ENCODE measurements at regions of chr4 and their contacts with region 1.

Region 1: GRCh38 chr4:142840516-142841123 is 5.5 kb downstream of the INPP4B start:
- H3K4me3 Mint-ChIP-seq: no peak overlapping the region
- H3K27ac Mint-ChIP-seq: no peak overlapping the region
- H3K4me1 Mint-ChIP-seq: peaks cover 7% of the 10 kb centered on the region
- H3K27me3 Mint-ChIP-seq: peaks cover 13% of the 10 kb centered on the region

Region 2: DNA sequence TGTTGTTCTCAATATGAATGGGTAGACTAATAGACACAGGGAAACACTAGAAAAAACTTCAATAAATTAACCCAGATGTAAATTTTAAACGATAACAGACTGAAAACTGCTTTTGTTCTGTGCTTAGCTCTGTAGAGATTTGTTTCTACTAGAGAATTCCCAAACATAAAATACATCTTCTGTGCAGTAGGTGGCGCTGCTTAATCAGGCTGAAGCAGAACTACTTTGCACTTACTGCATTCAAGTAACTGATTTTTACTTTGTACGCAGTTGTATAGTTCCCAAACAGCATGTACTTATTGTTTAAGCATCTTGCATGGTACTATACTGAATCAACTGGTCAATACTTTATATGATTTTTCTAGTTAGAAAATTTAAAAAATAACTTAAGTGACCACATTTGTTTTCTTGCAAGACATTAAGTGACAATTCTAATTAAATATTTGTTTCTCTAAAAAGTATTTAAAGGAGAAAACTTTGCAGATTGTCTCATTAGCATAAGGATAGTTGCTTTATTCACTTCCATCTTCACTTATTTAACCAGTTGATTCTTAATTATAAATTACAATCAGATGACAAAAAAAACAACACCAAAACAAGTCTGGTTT is 713.6 kb before region 1 on chr4:
- intact Hi-C with region 1: loop called (anchors 5 kb)
- H3K4me3 Mint-ChIP-seq: no peak overlapping the region
- H3K27ac Mint-ChIP-seq: no peak overlapping the region
- H3K4me1 Mint-ChIP-seq: peaks cover 9% of the 10 kb centered on the region
- H3K27me3 Mint-ChIP-seq: no peaks in the 10 kb centered on the region

Region 3: GRCh38 chr4:142282870-142283431 is 557.7 kb before region 1 on chr4:
- intact Hi-C with region 1: loop called (anchors 5 kb)
- H3K4me3 Mint-ChIP-seq: no peak overlapping the region
- H3K27ac Mint-ChIP-seq: no peak overlapping the region
- H3K4me1 Mint-ChIP-seq: peaks cover 6% of the 10 kb centered on the region
- H3K27me3 Mint-ChIP-seq: no peaks in the 10 kb centered on the region

Region 4: GRCh38 chr4:142353149-142353738 is 487.4 kb before region 1 on chr4:
- intact Hi-C with region 1: loop called (anchors 1 kb)
- H3K4me3 Mint-ChIP-seq: no peak overlapping the region
- H3K27ac Mint-ChIP-seq: no peak overlapping the region
- H3K4me1 Mint-ChIP-seq: peaks cover 6% of the 10 kb centered on the region
- H3K27me3 Mint-ChIP-seq: no peaks in the 10 kb centered on the region